IMR-90 (cell line): ENCODE measurements at regions of chr1 and their contacts with region 1.

Region 1: GRCh38 chr1:6601049-6601922 is 1.4 kb downstream of the KLHL21 start:
- DNase-seq: peak; percentile 97
- ATAC-seq: peak; percentile 9
- H3K4me3 ChIP-seq: peak overlapping the region; percentile 88
- H3K27ac ChIP-seq: peak overlapping the region; percentile 58
- H3K4me1 ChIP-seq: peaks cover 14% of the 10 kb centered on the region
- H3K27me3 ChIP-seq: no peaks in the 10 kb centered on the region
- CTCF ChIP-seq: no peak
- POLR2A ChIP-seq: peak; percentile 87
- RAD21 ChIP-seq: no peak

Region 2: GRCh38 chr1:6613361-6614018 is 12.2 kb after region 1 on chr1 and contains the start of gene PHF13:
- CTCF ChIA-PET with region 1: no interaction called
- POLR2A ChIA-PET with region 1: no interaction called
- dilution Hi-C with region 1: no loop called
- in situ Hi-C with region 1: no loop called
- intact Hi-C with region 1: loop called (anchors 1 kb)
- DNase-seq: peak; percentile 99
- ATAC-seq: peak; percentile 91
- H3K4me3 ChIP-seq: peak within 1 kb of the TSS; percentile 97
- H3K27ac ChIP-seq: peak within 1 kb of the TSS; percentile 93
- H3K4me1 ChIP-seq: peaks cover 5% of the 10 kb centered on the region
- H3K27me3 ChIP-seq: no peaks in the 10 kb centered on the region
- CTCF ChIP-seq: no peak
- POLR2A ChIP-seq: 0 out of 2 replicates have a peak, but pooled peaks have one; percentile 43
- RAD21 ChIP-seq: no peak
- total RNA-seq, gene PHF13: 7.3 and 9.4 TPM in 2 replicates

Region 3: DNA sequence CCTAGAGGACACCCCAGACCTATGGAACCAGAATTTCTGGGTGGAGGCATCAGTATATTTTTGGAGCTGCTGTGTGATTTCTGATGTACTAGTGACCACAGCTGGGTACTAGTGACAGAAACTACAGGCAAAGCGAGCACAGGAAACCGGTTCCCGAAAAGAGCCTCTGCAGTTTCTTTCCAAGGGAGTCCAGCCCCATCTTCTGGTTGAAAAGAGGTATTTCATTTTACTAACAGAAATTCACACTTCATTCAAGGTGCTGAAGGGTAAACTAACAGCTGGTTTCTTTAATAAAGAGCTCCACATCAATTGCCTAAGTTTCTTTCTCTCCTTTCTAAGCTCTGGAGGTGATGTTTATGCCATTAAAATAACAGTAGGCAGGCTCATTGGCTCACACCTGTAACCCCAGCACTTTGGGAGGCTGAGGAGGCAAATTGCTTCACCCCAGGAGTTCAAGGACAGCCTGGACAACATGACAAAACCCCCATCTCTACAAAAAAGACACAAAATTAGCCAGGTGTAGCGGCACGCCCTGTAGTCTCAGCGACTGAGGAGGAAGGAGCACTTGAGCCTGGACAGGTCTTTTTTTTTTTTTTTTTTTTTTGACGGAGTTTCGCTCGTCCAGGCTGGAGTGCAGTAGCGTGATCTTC is 45.3 kb after region 1 on chr1:
- CTCF ChIA-PET with region 1: no interaction called
- POLR2A ChIA-PET with region 1: no interaction called
- dilution Hi-C with region 1: no loop called
- in situ Hi-C with region 1: no loop called
- intact Hi-C with region 1: loop called (anchors 2 kb)
- DNase-seq: peak; percentile 54
- ATAC-seq: peak; percentile 87
- H3K4me3 ChIP-seq: no peak overlapping the region
- H3K27ac ChIP-seq: no peak overlapping the region
- H3K4me1 ChIP-seq: no peaks in the 10 kb centered on the region
- H3K27me3 ChIP-seq: no peaks in the 10 kb centered on the region
- CTCF ChIP-seq: peak; percentile 69
- POLR2A ChIP-seq: no peak
- RAD21 ChIP-seq: peak; percentile 78